A673 (cell line): ENCODE measurements at regions of chr3 and their contacts with region 1.

Region 1: DNA sequence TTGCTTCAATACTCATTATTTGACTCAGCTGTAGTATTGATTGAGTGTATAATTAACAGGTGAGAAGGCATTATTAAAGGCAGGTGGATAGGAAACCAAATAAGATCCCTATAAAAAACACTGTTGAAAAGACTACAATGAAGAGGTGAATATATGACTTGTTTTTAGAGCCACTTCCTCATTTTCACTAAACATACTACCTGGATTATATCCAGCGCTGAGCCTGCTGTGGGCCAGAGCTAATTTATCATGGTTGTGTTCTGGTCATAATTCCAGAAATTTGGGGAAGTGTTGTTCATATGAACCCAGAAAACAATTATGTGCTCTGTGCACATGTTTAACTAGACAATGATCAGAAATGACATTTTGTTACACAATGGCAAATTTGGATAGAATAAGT is 235.3 kb upstream of the MME start:
- DNase-seq: no peak
- H3K4me3 ChIP-seq: no peak overlapping the region
- H3K27ac ChIP-seq: no peak overlapping the region
- H3K4me1 ChIP-seq: no peaks in the 10 kb centered on the region
- H3K27me3 ChIP-seq: no peaks in the 10 kb centered on the region
- CTCF ChIP-seq: no peak

Region 2: DNA sequence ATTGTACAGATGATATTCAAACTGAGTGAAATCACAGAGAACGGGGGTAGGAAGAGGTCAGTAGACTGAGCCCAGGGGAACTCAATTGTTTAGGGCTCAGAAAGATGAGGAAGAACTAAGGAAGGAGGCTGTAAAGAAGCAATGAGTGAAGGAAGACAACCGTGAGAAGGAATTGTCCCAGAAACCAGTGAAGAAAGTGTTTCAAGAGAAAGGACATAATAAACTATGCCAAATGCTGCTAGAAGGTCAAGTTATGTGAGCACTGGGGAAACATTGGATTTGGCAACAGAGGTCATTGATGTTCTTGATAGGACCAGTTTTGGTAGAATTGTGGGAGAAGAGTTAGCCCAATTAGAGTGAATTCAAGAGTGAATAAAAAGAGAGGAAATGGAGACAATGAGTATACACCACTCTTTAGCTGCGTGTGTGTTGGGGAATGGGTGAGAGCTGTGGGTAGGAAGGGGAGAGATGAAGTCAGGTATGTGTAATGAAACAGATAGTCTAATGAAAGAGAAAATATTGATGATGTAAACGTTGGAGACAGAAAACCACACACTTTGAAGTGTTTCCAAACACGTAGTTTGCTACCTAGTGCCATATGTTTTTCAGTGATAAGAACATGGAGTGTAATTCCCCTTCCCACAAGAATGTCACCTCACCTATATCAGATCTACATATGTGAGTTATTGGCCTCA is 192.8 kb after region 1 on chr3:
- CTCF ChIA-PET with region 1: no interaction called
- POLR2A ChIA-PET with region 1: interaction called, 13 read pairs
- intact Hi-C with region 1: no loop called
- DNase-seq: no peak
- H3K4me3 ChIP-seq: no peak overlapping the region
- H3K27ac ChIP-seq: no peak overlapping the region
- H3K4me1 ChIP-seq: no peaks in the 10 kb centered on the region
- H3K27me3 ChIP-seq: no peaks in the 10 kb centered on the region
- CTCF ChIP-seq: no peak